Thyroid gland (tissue), 4 donors: ENCODE measurements at regions of chr9 and their contacts with region 1.

Region 1: GRCh38 chr9:19230356-19231125 is at the start of gene DENND4C:
- DNase-seq: peak; percentile 89
- H3K4me3 ChIP-seq: peak within 1 kb of the TSS; percentile 18 to 76 (median 64)
- H3K27ac ChIP-seq: peak within 1 kb of the TSS; percentile 93 to 99 (median 95)
- H3K4me1 ChIP-seq: peaks cover 13 to 19% of the 10 kb centered on the region in 2 donors
- H3K27me3 ChIP-seq: no peaks in the 10 kb centered on the region
- CTCF ChIP-seq: no peak
- POLR2A ChIP-seq: peak in 1 of 2 donors; percentile 95
- total RNA-seq, gene DENND4C: 99.5 to 135 (median 111) TPM

Region 2: DNA sequence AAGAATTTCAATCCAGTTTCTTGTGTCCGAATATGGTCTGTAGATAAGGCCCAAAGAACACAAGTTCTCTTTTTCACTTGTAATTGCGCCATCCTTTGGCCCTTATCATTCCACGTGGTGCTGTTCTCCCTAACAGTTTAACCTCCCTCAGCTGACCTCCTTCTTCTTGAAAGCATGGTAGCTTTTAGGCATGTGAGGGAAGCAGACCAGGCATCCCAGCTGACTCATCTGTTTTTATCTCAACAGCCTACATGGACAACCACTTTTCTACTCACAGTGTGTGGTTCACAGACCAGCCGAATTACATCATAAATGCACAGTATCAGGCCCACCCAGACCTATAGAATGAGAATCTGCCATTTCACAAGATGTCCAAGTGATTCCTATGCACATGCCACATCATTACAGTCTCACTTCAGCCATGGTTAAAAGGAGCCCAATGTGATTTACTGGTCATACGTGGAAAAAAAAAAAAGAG is 76.4 kb before region 1 on chr9:
- intact Hi-C with region 1: no loop called
- DNase-seq: peak in 1 of 2 donors; percentile 6
- H3K4me3 ChIP-seq: no peak overlapping the region
- H3K27ac ChIP-seq: no peak overlapping the region
- H3K4me1 ChIP-seq: peaks cover 0 to 9% of the 10 kb centered on the region in 2 donors
- H3K27me3 ChIP-seq: no peaks in the 10 kb centered on the region
- CTCF ChIP-seq: no peak
- POLR2A ChIP-seq: no peak

Region 3: DNA sequence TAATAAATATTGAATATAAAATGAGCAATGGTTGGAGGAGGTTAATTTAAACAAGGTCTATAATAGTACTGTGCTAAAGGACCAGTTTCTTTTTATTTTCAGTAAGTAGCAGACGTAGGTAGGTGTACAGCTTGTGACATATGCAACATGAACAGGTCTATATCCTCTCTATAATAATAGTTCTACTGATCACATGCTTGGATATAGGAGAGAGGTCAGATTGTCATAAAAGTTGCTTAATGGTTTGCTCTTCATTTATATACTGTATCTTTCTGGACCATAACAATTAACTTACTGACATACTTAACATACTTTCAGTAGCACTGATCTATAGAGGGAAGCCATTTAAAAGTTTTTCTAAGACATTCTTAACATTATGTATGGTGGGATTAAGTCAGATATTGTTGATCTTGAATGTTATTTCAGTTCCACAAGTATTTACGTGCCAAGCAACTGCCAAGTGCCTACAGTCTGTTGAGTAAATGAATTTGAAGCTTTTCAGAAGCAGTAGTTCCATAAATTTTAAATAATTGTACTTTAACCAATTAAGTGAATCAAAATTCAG is 68.0 kb after region 1 on chr9:
- intact Hi-C with region 1: loop called (anchors 10 kb)
- DNase-seq: no peak
- H3K4me3 ChIP-seq: no peak overlapping the region
- H3K27ac ChIP-seq: no peak overlapping the region
- H3K4me1 ChIP-seq: peaks cover 0 to 3% of the 10 kb centered on the region in 2 donors
- H3K27me3 ChIP-seq: no peaks in the 10 kb centered on the region
- CTCF ChIP-seq: no peak
- POLR2A ChIP-seq: no peak